ENCODE measurements at regions of chr9 and their contacts with region 1.

Region 1: DNA sequence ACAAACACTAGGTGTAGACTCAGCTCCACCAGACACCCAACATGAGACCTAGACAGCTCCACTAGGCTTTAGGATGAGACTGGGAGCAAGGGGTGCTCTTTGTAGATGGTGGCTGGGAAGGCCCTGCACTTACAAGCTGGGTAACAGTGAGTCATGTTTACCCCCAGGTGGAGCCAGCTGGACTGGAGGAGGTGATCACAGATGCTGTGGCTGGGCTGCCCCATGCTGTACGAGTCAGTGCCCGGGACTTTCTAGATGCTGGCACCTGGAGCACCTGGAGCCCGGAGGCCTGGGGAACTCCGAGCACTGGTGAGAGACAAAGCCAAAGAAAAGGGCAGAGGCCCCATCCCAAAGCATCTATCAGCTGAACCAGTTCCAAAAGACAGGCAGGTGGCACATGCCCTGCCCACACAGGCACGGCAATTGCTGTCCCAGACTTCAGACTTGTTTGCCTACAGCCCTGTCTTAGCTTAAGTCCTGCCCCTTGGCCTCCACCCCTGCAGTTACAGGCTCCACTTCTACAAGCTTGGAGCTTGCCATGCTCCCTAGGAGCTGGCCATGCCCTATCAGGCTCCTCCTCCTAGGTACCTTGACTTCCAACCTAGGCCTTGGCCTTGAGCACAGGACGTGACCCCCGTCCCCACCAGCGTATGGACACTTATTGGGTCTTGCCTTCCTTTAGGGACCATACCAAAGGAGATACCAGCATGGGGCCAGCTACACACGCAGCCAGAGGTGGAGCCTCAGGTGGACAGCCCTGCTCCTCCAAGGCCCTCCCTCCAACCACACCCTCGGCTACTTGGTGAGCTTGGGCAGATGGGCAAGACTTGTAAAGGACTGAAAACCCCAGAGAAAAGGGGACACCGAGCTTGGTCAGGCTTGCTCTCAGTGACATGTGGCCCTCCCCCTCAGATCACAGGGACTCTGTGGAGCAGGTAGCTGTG is 2.6 kb downstream of the CCL27 start:
- DNase-seq: peak; percentile 57
- ATAC-seq: peak; percentile 60
- H3K4me3 ChIP-seq: no peak overlapping the region
- H3K27ac ChIP-seq: no peak overlapping the region
- H3K4me1 ChIP-seq: peaks cover 3% of the 10 kb centered on the region; the same call in 1 of the 2 replicates
- H3K27me3 ChIP-seq: no peaks in the 10 kb centered on the region
- CTCF ChIP-seq: no peak

Region 2: DNA sequence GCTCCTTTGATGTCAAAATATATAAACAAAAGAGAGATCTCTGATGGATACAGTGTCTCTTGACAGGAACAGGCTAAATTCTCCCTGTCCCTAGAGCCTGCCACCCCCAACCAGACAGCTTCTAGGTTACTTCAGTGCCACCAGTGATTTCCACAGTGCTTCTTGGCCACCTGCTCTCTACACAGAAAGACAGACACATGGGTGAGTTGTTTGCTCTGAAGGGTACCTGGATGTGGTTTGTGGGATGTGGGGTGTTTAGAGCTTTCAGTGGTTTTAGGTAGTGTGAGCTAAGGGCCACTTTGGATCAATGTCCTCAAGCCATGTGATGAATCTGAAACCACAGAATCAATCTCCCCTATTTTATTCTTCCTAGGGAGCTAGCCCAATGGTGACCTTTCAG is 1010.4 kb before region 1 on chr9:
- CTCF ChIA-PET with region 1: no interaction called
- POLR2A ChIA-PET with region 1: interaction called, 13 read pairs
- intact Hi-C with region 1: no loop called
- DNase-seq: no peak
- ATAC-seq: no peak
- H3K4me3 ChIP-seq: no peak overlapping the region
- H3K27ac ChIP-seq: no peak overlapping the region
- H3K4me1 ChIP-seq: no peaks in the 10 kb centered on the region
- H3K27me3 ChIP-seq: peaks cover 21% of the 10 kb centered on the region
- CTCF ChIP-seq: no peak

Region 3: GRCh38 chr9:34899535-34900158 is 239.8 kb after region 1 on chr9:
- CTCF ChIA-PET with region 1: no interaction called
- POLR2A ChIA-PET with region 1: no interaction called
- intact Hi-C with region 1: no loop called
- DNase-seq: peak; percentile 76
- ATAC-seq: peak; percentile 100
- H3K4me3 ChIP-seq: no peak overlapping the region
- H3K27ac ChIP-seq: no peak overlapping the region
- H3K4me1 ChIP-seq: no peaks in the 10 kb centered on the region
- H3K27me3 ChIP-seq: peaks cover 22% of the 10 kb centered on the region
- CTCF ChIP-seq: peak; percentile 74

Region 4: GRCh38 chr9:35102926-35103659 is 443.2 kb after region 1 on chr9 and contains the start of gene STOML2:
- CTCF ChIA-PET with region 1: no interaction called
- POLR2A ChIA-PET with region 1: interaction called, 10 read pairs
- intact Hi-C with region 1: no loop called
- DNase-seq: peak; percentile 89
- ATAC-seq: peak; percentile 98
- H3K4me3 ChIP-seq: peak within 1 kb of the TSS; percentile 83
- H3K27ac ChIP-seq: peak within 1 kb of the TSS; percentile 38
- H3K4me1 ChIP-seq: peaks cover 16% of the 10 kb centered on the region
- H3K27me3 ChIP-seq: no peaks in the 10 kb centered on the region
- CTCF ChIP-seq: no peak
- total RNA-seq, gene STOML2: 161 and 175 TPM in 2 replicates

Region 5: GRCh38 chr9:35385042-35385441 is 725.2 kb after region 1 on chr9:
- CTCF ChIA-PET with region 1: no interaction called
- POLR2A ChIA-PET with region 1: no interaction called
- intact Hi-C with region 1: no loop called
- DNase-seq: peak; percentile 20
- ATAC-seq: peak; percentile 15; the same call in 1 of the 2 replicates
- H3K4me3 ChIP-seq: no peak overlapping the region
- H3K27ac ChIP-seq: no peak overlapping the region
- H3K4me1 ChIP-seq: no peaks in the 10 kb centered on the region
- H3K27me3 ChIP-seq: no peaks in the 10 kb centered on the region
- CTCF ChIP-seq: peak; percentile 37

Measured in PC-3 (cell line).